CD8-positive, alpha-beta memory T cell (primary cell): ENCODE measurements at regions of chr22 and their contacts with region 1.

Region 1: DNA sequence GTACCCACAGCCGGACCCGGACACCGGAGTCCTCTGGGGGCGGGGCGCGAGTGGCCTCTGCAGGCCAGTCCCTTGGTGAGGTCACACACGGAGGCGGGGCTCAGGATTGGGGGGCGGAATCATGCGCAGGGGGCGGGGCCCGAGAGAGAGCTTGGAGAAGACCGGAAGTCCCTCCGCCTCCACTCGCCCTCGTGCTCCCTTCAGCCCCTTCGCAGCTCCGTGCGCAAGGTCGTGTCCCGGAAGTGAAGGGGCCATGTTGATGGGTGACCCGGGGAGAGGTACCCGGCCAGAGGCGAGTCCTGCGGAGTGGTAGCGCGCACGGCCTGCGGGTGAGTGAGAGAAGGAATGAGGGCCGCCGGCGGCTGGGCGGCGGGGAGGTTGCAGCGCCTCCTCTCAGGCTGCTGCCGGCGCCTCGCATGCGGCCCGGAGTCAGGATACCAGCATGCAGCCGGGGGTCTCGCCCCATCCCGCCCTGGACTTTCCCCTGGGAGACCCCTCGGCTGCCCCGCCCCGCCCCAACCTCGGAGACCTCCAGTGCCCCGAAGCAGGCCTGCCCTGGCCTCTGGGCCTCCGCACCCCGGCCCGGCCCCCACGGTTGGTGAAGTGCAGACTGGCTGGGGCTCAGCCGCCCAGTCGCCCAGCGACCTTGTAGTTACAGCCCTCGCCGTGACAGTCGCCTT is at the start of gene MIEF1:
- DNase-seq: peak; percentile 80 to 92 (median 83)
- H3K4me3 ChIP-seq: peak within 1 kb of the TSS; percentile 70
- H3K4me3 Mint-ChIP-seq: peak within 1 kb of the TSS; percentile 91 to 98 (median 97)
- H3K27ac ChIP-seq: peak within 1 kb of the TSS; percentile 71
- H3K27ac Mint-ChIP-seq: peak within 1 kb of the TSS; percentile 78 to 99 (median 95)
- H3K4me1 ChIP-seq: peaks cover 24% of the 10 kb centered on the region
- H3K4me1 Mint-ChIP-seq: peaks cover 39 to 48% (median 45%) of the 10 kb centered on the region in 3 donors
- H3K27me3 ChIP-seq: no peaks in the 10 kb centered on the region
- H3K27me3 Mint-ChIP-seq: peaks cover 0 to 2% of the 10 kb centered on the region in 2 donors
- total RNA-seq, gene MIEF1: 59.9 to 60.9 TPM

Region 2: GRCh38 chr22:39520054-39520891 is 18.0 kb after region 1 on chr22 and contains the start of gene ATF4:
- CTCF ChIA-PET with region 1: interaction called, 51 read pairs
- POLR2A ChIA-PET with region 1: interaction called, 16 read pairs
- DNase-seq: peak; percentile 94 to 99 (median 96)
- H3K4me3 ChIP-seq: peak within 1 kb of the TSS; percentile 90
- H3K4me3 Mint-ChIP-seq: peak within 1 kb of the TSS; percentile 89 to 99 (median 96)
- H3K27ac ChIP-seq: peak within 1 kb of the TSS; percentile 80
- H3K27ac Mint-ChIP-seq: peak within 1 kb of the TSS; percentile 95 to 100 (median 98)
- H3K4me1 ChIP-seq: peaks cover 39% of the 10 kb centered on the region
- H3K4me1 Mint-ChIP-seq: peaks cover 47 to 56% (median 51%) of the 10 kb centered on the region in 3 donors
- H3K27me3 ChIP-seq: no peaks in the 10 kb centered on the region
- H3K27me3 Mint-ChIP-seq: peaks cover 0 to 14% of the 10 kb centered on the region in 2 donors
- total RNA-seq, gene ATF4: 757 to 758 TPM

Region 3: GRCh38 chr22:39773976-39774539 is 271.8 kb after region 1 on chr22:
- CTCF ChIA-PET with region 1: no interaction called
- POLR2A ChIA-PET with region 1: no interaction called
- DNase-seq: no peak
- H3K4me3 ChIP-seq: no peak overlapping the region
- H3K4me3 Mint-ChIP-seq: peak overlapping the region in 3 of 7 donors; percentile 8 to 36 (median 34)
- H3K27ac ChIP-seq: no peak overlapping the region
- H3K27ac Mint-ChIP-seq: peak overlapping the region in 5 of 8 donors; percentile 1 to 64 (median 31)
- H3K4me1 ChIP-seq: peaks cover 16% of the 10 kb centered on the region
- H3K4me1 Mint-ChIP-seq: peaks cover 13 to 31% (median 20%) of the 10 kb centered on the region in 3 donors
- H3K27me3 ChIP-seq: no peaks in the 10 kb centered on the region
- H3K27me3 Mint-ChIP-seq: peaks cover 0 to 1% of the 10 kb centered on the region in 2 donors